Kidney (tissue), 22 donors: ENCODE measurements at regions of chr5 and their contacts with region 1.

Region 1: GRCh38 chr5:170183816-170184687 is 48.7 kb upstream of the C5orf58 start:
- DNase-seq: peak in 4 of 5 donors; percentile 77 to 88 (median 82)
- H3K4me3 ChIP-seq: no peak overlapping the region
- H3K27ac ChIP-seq: no peak overlapping the region
- H3K4me1 ChIP-seq: peaks cover 0 to 5% (median 4%) of the 10 kb centered on the region in 3 donors
- H3K27me3 ChIP-seq: no peaks in the 10 kb centered on the region
- CTCF ChIP-seq: peak; percentile 86

Region 2: DNA sequence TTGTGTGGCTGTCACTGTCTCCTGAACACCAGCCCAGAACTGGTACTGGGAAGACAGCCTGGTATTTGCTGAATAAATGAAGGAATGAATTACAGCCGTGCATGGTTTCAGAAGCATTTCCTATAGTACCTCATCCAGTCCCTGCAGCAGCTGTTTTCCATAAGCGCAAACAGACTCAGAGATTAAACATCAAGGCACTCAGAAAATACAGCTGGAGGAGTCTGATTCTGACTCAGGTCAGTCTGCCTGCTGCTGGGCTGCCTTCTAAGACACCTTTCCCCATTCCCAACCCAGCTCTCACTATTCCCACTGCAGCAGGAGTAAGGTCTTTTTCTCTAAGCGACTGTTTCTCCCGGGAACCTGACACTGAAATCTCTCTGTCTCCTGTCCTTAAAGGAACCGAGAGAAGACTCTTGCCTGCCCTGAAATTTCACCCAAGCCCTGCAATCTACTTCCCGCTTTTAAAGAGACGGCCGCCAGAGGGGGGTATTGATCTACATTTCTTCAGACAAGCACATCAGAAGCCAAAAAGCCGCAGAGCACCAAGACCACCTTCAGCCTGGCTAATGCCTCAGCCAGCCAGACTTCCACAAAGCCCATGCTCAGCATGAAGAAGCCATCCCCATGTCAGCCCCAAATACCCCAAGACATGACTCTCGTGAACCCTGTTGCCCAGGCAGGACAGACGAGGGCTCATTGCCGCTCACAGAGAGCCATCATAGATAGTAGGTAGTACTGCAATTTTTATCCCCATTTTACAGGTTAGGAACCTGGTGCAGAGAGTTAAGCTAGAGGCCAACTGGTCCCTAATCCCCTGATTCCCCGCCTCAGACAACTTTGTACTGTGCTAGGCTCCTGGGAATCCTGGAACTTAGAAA is 83.7 kb before region 1 on chr5:
- intact Hi-C with region 1: loop called (anchors 10 kb)
- DNase-seq: peak in 4 of 5 donors; percentile 89 to 95 (median 92)
- H3K4me3 ChIP-seq: no peak overlapping the region
- H3K27ac ChIP-seq: no peak overlapping the region
- H3K4me1 ChIP-seq: no peaks in the 10 kb centered on the region
- H3K27me3 ChIP-seq: no peaks in the 10 kb centered on the region
- CTCF ChIP-seq: peak; percentile 66